Head of caudate nucleus (tissue), 42 donors: ENCODE measurements at regions of chr1 and their contacts with region 1.

Region 1: DNA sequence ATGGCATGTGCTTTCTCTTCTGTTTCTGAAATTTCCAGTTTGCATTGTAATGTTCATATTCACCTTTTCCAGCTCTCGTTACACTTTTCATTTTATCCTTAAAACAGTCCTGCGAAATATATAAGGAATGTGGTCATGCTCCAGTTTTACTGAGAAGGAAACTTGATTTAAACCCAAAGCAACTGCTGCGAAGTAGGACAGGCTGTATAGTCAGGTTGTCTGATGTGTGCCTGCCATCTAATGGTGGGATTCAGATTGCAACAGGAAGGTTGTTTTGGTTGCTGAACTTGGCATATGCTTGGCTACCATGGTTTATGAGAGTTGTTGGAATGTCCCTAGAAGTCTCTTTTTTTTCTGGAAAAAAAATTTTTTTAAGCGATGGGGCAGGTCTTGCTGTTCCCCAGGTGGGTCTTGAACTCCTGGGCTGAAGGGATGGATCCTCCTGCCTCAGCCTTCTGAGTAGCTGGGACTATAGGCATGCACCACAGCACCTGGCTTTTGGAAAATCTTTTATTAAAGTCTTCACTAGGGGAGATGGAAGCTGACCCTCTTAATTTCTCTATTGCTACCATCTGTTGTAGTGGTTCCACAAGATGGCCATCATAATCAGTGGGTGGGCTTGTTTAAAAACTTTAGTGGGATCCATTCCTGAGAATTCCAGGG is 86.9 kb downstream of the UCK2 start:
- DNase-seq: peak in 39 of 42 donors; percentile 31 to 89 (median 72)

Region 2: DNA sequence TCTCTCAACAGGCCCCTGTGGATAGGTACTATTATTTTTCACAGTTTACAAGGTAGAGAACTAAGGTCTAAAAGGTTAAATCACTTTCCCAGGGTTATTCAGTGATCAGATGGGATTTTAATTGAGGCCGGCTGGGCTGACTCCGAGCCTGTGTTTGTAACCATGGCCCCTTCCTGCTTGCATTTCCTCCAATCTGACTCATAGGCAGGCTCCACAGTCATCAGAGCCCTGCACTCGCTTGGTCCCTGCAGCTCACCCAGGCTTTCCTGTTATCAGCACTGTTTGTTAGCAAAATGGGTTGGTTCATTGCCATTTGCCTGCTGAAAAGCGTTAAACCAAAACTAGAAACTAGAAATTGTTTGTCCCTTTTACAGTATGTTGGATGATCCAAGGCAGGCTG is 516.3 kb before region 1 on chr1:
- intact Hi-C with region 1: loop called (anchors 5 kb)
- DNase-seq: no peak

Region 3: GRCh38 chr1:165597883-165598675 is 316.2 kb before region 1 on chr1:
- intact Hi-C with region 1: loop called (anchors 5 kb)
- DNase-seq: peak; percentile 92 to 99 (median 97)

Region 4: GRCh38 chr1:165717918-165718515 is 196.2 kb before region 1 on chr1:
- intact Hi-C with region 1: loop called (anchors 5 kb)
- DNase-seq: peak in 36 of 42 donors; percentile 19 to 79 (median 58)